T-cell (primary cell): ENCODE measurements at regions of chr4 and their contacts with region 1.

Region 1: GRCh38 chr4:169523796-169524195 is 88.6 kb downstream of the NEK1 start:
- DNase-seq: no peak
- ATAC-seq: no peak
- H3K4me3 ChIP-seq: no peak overlapping the region
- H3K4me3 Mint-ChIP-seq: no peak overlapping the region
- H3K27ac ChIP-seq: no peak overlapping the region
- H3K27ac Mint-ChIP-seq: no peak overlapping the region
- H3K4me1 ChIP-seq: no peaks in the 10 kb centered on the region
- H3K4me1 Mint-ChIP-seq: no peaks in the 10 kb centered on the region
- H3K27me3 ChIP-seq: no peaks in the 10 kb centered on the region
- H3K27me3 Mint-ChIP-seq: no peaks in the 10 kb centered on the region

Region 2: GRCh38 chr4:169410839-169411770 is 112.7 kb before region 1 on chr4:
- CTCF ChIA-PET with region 1: no interaction called
- POLR2A ChIA-PET with region 1: no interaction called
- DNase-seq: peak; percentile 20 to 76 (median 50)
- ATAC-seq: peak; percentile 95 to 100 (median 99)
- H3K4me3 ChIP-seq: no peak overlapping the region
- H3K4me3 Mint-ChIP-seq: peak overlapping the region in 1 of 3 donors; percentile 36
- H3K27ac ChIP-seq: no peak overlapping the region
- H3K27ac Mint-ChIP-seq: peak overlapping the region; percentile 68 to 88
- H3K4me1 ChIP-seq: peaks cover 10 to 13% of the 10 kb centered on the region in 2 experiments
- H3K4me1 Mint-ChIP-seq: peaks cover 28 to 34% (median 29%) of the 10 kb centered on the region in 3 donors
- H3K27me3 ChIP-seq: no peaks in the 10 kb centered on the region
- H3K27me3 Mint-ChIP-seq: no peaks in the 10 kb centered on the region

Region 3: DNA sequence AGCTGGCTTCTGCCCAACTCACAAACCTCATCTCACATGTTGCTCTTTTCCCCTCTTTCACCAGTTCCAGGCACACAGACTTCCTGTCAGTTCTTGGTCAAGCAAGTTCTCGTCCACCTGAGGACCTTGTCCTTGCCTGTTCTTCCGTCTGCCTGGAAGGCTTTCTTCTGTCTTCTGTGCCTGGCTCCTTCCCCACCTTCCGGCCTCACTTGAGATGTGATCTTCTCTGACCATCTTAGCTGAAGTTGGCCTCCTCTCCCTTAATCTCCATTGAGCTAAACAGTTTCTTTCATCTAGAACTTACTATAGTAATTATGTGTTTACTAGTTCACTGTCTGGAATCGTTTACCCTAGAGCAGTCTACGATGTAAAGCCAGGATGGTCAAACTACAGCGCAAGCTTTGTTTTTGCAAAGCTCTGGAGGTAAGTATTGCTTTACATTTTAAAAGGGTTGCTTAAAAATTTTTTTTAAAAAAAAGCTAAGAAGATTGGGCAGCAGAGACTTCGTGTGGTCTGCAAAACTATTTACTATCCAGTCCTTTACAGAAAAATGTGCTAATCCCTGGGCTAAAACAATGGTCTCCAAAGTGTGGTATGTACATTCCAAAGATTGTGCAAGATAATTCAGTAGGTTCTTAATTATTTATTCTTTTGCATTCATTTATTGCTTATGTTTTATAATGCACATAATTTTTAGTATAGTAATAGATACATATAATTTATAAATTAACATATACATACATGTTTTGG is 389.0 kb after region 1 on chr4:
- CTCF ChIA-PET with region 1: no interaction called
- POLR2A ChIA-PET with region 1: interaction called in 1 of 2 experiments, 13 read pairs
- DNase-seq: no peak
- ATAC-seq: no peak
- H3K4me3 ChIP-seq: no peak overlapping the region
- H3K4me3 Mint-ChIP-seq: no peak overlapping the region
- H3K27ac ChIP-seq: no peak overlapping the region
- H3K27ac Mint-ChIP-seq: no peak overlapping the region
- H3K4me1 ChIP-seq: no peaks in the 10 kb centered on the region
- H3K4me1 Mint-ChIP-seq: no peaks in the 10 kb centered on the region
- H3K27me3 ChIP-seq: no peaks in the 10 kb centered on the region
- H3K27me3 Mint-ChIP-seq: peaks cover 6 to 12% of the 10 kb centered on the region in 2 donors